ENCODE measurements at regions of chr3 and their contacts with region 1.

Region 1: DNA sequence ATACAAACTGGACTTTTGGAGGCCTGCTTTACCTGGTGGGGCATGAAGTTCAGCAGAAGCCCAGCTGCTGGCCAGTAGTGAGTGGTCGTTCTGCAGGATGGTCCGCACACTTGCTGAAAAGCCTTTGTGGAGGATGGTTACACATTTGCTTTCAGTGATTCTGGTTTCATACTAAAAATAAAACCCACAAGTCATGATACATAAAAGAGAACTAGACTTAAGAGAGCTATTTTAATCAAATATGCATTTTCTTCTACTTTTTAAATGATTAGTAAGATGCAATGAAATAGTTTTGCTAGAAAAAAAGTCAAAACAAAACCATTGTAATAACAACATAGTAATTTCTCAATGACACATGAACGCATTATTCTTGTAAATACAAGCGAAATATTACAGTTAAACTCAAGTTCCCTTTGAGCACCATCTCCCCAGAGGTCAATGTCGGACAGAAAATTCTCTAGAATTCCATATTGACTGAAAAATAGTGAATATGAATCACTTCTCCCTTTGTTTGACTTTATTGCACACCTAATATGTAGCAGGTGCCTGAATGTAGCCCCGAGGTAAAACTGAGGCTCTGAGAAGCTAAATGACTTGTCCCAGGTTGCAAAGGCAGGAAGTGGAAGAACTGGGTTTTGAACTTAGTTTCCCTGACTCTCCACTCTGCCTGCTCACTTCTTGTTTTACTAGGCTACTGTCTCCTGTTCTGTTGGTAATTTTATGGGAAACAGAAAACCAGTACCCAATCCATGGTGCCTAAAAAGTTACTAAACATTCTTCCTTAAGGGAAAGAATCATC is 8.3 kb downstream of the IL5RA start:
- DNase-seq: no peak
- ATAC-seq: no peak
- H3K4me3 ChIP-seq: no peak overlapping the region
- H3K4me3 Mint-ChIP-seq: no peak overlapping the region
- H3K27ac ChIP-seq: no peak overlapping the region
- H3K27ac Mint-ChIP-seq: no peak overlapping the region
- H3K4me1 ChIP-seq: no peaks in the 10 kb centered on the region
- H3K4me1 Mint-ChIP-seq: no peaks in the 10 kb centered on the region
- H3K27me3 ChIP-seq: no peaks in the 10 kb centered on the region
- H3K27me3 Mint-ChIP-seq: peaks cover 9% of the 10 kb centered on the region
- CTCF ChIP-seq: no peak

Region 2: GRCh38 chr3:3074551-3075257 is 27.2 kb before region 1 on chr3:
- CTCF ChIA-PET with region 1: no interaction called
- POLR2A ChIA-PET with region 1: no interaction called
- intact Hi-C with region 1: loop called in 1 of 2 experiments (anchors 2 kb)
- DNase-seq: no peak
- ATAC-seq: no peak
- H3K4me3 ChIP-seq: no peak overlapping the region
- H3K4me3 Mint-ChIP-seq: no peak overlapping the region
- H3K27ac ChIP-seq: no peak overlapping the region
- H3K27ac Mint-ChIP-seq: no peak overlapping the region
- H3K4me1 ChIP-seq: no peaks in the 10 kb centered on the region
- H3K4me1 Mint-ChIP-seq: no peaks in the 10 kb centered on the region
- H3K27me3 ChIP-seq: peaks cover 0 to 2% of the 10 kb centered on the region in 2 experiments
- H3K27me3 Mint-ChIP-seq: peaks cover 6% of the 10 kb centered on the region
- CTCF ChIP-seq: no peak

Region 3: DNA sequence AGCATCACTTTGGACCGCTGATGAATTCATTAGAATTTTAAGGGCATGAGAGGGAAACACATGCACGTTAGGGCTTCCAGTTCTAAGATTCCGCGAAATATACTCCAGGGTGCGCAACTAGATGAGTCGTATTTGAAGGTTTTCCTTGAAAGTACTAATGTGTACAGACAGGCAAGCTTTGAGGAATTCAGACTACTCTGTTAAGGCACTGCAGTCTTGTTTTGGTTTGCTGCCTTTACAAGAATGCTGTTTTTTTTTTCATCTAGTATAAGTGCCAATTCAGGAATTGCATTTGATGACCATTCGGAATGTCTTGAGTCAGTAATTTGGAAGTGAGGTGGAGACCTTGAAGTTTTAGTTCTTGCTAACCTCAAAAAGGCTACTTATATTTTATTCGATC is 44.0 kb after region 1 on chr3:
- CTCF ChIA-PET with region 1: no interaction called
- POLR2A ChIA-PET with region 1: no interaction called
- intact Hi-C with region 1: no loop called
- DNase-seq: no peak
- ATAC-seq: no peak
- H3K4me3 ChIP-seq: no peak overlapping the region
- H3K4me3 Mint-ChIP-seq: no peak overlapping the region
- H3K27ac ChIP-seq: no peak overlapping the region
- H3K27ac Mint-ChIP-seq: peak overlapping the region; percentile 13
- H3K4me1 ChIP-seq: no peaks in the 10 kb centered on the region
- H3K4me1 Mint-ChIP-seq: peaks cover 27% of the 10 kb centered on the region
- H3K27me3 ChIP-seq: no peaks in the 10 kb centered on the region
- H3K27me3 Mint-ChIP-seq: no peaks in the 10 kb centered on the region
- CTCF ChIP-seq: no peak

Measured in CD4-positive, alpha-beta T cell (primary cell).